ENCODE measurements at regions of chr10 and their contacts with region 1.

Region 1: DNA sequence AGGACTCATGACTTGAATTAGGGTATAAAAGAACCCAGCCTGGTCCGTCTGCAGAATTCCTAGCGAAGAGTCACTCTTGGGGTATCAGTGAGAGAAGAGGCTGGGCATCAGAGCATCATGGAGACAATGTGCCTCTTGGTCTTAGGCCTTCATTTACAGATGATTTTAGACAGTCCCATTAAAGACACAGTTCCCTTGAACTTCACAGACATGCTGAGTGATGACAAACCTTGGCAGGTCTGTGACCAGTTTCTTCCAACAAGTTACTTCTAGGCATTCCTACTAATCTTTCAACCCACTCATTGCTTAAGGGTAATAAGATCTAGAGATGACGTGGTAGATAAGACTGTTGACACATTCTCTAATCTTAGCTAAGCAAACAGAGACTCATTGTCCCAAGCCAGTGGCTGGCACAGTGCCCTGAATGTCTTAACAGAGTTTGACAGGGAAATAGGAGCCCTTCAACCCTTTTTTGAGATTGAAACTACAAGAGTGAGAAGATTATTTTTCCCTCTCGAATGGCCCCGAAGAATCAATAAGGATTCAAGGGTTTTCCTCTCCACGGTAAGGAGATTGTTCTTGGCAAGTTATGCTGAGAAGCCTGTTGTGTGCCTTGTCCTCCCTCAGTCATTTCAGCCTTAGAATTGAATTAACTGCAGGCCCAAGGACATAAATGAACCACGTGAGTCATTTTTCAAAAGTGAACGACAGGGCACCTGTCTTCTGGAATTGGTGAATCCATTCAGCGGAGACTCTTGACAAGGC is 281.1 kb downstream of the CCDC3 start:
- DNase-seq: peak; percentile 90
- ATAC-seq: peak; percentile 79 to 84

Region 2: GRCh38 chr10:12287772-12288171 is 432.6 kb before region 1 on chr10:
- intact Hi-C with region 1: no loop called
- DNase-seq: no peak
- ATAC-seq: peak; percentile 34 to 92

Region 3: GRCh38 chr10:12605580-12606405 is 114.6 kb before region 1 on chr10:
- intact Hi-C with region 1: no loop called
- DNase-seq: peak; percentile 76
- ATAC-seq: peak; percentile 92 to 95

Region 4: GRCh38 chr10:12757351-12757750 is 37.0 kb after region 1 on chr10:
- intact Hi-C with region 1: no loop called
- DNase-seq: no peak
- ATAC-seq: no peak

Region 5: DNA sequence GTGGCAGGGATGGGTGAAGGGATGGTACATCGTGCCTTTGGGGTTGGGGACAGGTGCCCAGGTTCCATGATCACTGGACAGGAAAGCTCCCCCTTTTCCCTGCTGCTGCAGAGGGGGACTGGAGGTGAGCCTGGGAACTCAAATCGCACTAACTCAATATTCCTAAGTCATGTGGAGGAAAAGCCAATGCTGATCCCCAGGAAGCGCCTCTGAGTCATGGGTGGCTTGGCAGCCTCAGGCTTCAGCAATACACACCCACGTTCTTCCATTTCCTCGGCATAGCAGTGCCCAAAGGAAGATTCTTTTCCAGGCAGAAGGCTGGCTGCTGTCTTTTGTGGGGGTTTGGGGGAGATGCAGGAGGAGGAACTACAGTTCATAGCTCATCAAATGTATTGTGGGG is 115.3 kb after region 1 on chr10:
- intact Hi-C with region 1: loop called in 1 of 2 experiments (anchors 10 kb)
- DNase-seq: peak; percentile 47
- ATAC-seq: peak in 1 of 2 donors; percentile 48

Measured in left cardiac atrium (tissue), 4 donors.